ENCODE measurements at regions of chr21 and their contacts with region 1.

Region 1: GRCh38 chr21:31781737-31782136 is 49.8 kb upstream of the SCAF4 start:
- DNase-seq: no peak
- ATAC-seq: no peak
- H3K4me3 ChIP-seq: no peak overlapping the region
- H3K27ac ChIP-seq: no peak overlapping the region
- H3K4me1 ChIP-seq: no peaks in the 10 kb centered on the region
- H3K27me3 ChIP-seq: no peaks in the 10 kb centered on the region
- CTCF ChIP-seq: no peak
- POLR2A ChIP-seq: no peak
- RAD21 ChIP-seq: no peak

Region 2: GRCh38 chr21:31748627-31749026 is 33.1 kb before region 1 on chr21:
- CTCF ChIA-PET with region 1: no interaction called
- POLR2A ChIA-PET with region 1: no interaction called
- RAD21 ChIA-PET with region 1: no interaction called
- intact Hi-C with region 1: no loop called
- DNase-seq: no peak
- ATAC-seq: no peak
- H3K4me3 ChIP-seq: no peak overlapping the region
- H3K27ac ChIP-seq: no peak overlapping the region
- H3K4me1 ChIP-seq: peaks cover 3 to 9% of the 10 kb centered on the region in 2 experiments; a peak in 3 of 4 replicates
- H3K27me3 ChIP-seq: no peaks in the 10 kb centered on the region
- CTCF ChIP-seq: no peak
- POLR2A ChIP-seq: no peak
- RAD21 ChIP-seq: no peak

Region 3: GRCh38 chr21:31798842-31799704 is 17.3 kb after region 1 on chr21:
- CTCF ChIA-PET with region 1: interaction called, 13 read pairs
- POLR2A ChIA-PET with region 1: no interaction called
- RAD21 ChIA-PET with region 1: no interaction called
- intact Hi-C with region 1: no loop called
- DNase-seq: no peak
- ATAC-seq: no peak
- H3K4me3 ChIP-seq: no peak overlapping the region
- H3K27ac ChIP-seq: no peak overlapping the region
- H3K4me1 ChIP-seq: no peaks in the 10 kb centered on the region
- H3K27me3 ChIP-seq: peaks cover 34% of the 10 kb centered on the region
- CTCF ChIP-seq: no peak
- POLR2A ChIP-seq: no peak
- RAD21 ChIP-seq: no peak

Region 4: GRCh38 chr21:32257962-32258785 is 476.4 kb after region 1 on chr21:
- CTCF ChIA-PET with region 1: interaction called, 39 read pairs
- POLR2A ChIA-PET with region 1: no interaction called
- RAD21 ChIA-PET with region 1: interaction called in 1 of 2 experiments, 4 read pairs
- intact Hi-C with region 1: loop called (anchors 2 kb)
- DNase-seq: peak; percentile 62
- ATAC-seq: peak; percentile 96
- H3K4me3 ChIP-seq: no peak overlapping the region
- H3K27ac ChIP-seq: no peak overlapping the region
- H3K4me1 ChIP-seq: peaks cover 0 to 14% of the 10 kb centered on the region in 2 experiments; a peak in 3 of 4 replicates
- H3K27me3 ChIP-seq: peaks cover 24% of the 10 kb centered on the region
- CTCF ChIP-seq: peak; percentile 64 to 87 (median 77); a peak in 5 of 6 replicates
- POLR2A ChIP-seq: no peak
- RAD21 ChIP-seq: peak; percentile 81

Region 5: GRCh38 chr21:32597205-32597604 is 815.5 kb after region 1 on chr21:
- CTCF ChIA-PET with region 1: interaction called, 11 read pairs
- POLR2A ChIA-PET with region 1: no interaction called
- RAD21 ChIA-PET with region 1: interaction called in 1 of 2 experiments, 7 read pairs
- intact Hi-C with region 1: loop called (anchors 2 kb)
- DNase-seq: peak; percentile 77
- ATAC-seq: peak; percentile 80
- H3K4me3 ChIP-seq: no peak overlapping the region; a peak in 1 of 4 replicates
- H3K27ac ChIP-seq: no peak overlapping the region
- H3K4me1 ChIP-seq: peaks cover 3 to 14% of the 10 kb centered on the region in 2 experiments; a peak in 3 of 4 replicates
- H3K27me3 ChIP-seq: no peaks in the 10 kb centered on the region
- CTCF ChIP-seq: no peak
- POLR2A ChIP-seq: no peak
- RAD21 ChIP-seq: peak; percentile 12; the same call in 1 of the 2 replicates

Region 6: DNA sequence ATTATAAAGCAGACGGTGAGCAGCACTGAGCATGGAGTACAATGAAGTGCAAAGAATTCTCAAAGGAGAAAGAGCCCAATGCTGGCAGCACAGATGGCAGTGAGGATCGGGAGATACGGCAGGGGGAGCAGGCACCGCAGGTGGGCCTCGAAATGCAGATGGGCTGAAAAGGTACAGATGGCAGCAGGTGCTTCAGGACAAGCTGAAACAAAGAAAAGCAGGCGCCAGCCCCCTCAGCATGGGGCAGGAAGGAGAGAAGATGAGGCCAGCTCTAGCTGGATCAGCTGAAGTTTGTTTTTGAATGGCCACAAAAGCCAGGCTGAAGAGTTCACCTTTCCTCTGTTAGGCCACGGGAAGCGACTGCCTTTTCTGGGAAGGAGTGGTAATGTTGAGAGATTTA is 822.7 kb after region 1 on chr21:
- CTCF ChIA-PET with region 1: interaction called, 11 read pairs
- POLR2A ChIA-PET with region 1: no interaction called
- RAD21 ChIA-PET with region 1: interaction called in 1 of 2 experiments, 7 read pairs
- intact Hi-C with region 1: loop called (anchors 2 kb)
- DNase-seq: no peak
- ATAC-seq: no peak
- H3K4me3 ChIP-seq: no peak overlapping the region
- H3K27ac ChIP-seq: no peak overlapping the region
- H3K4me1 ChIP-seq: no peaks in the 10 kb centered on the region
- H3K27me3 ChIP-seq: no peaks in the 10 kb centered on the region
- CTCF ChIP-seq: no peak
- POLR2A ChIP-seq: no peak
- RAD21 ChIP-seq: no peak